Posterior cingulate gyrus (tissue), 11 donors: ENCODE measurements at regions of chr3 and their contacts with region 1.

Region 1: GRCh38 chr3:33131331-33132018 is 17.7 kb downstream of the CRTAP start:
- DNase-seq: peak in 4 of 10 donors; percentile 31 to 88 (median 48)

Region 2: GRCh38 chr3:32882603-32883025 is 248.9 kb before region 1 on chr3:
- intact Hi-C with region 1: no loop called
- DNase-seq: no peak

Region 3: GRCh38 chr3:32992322-32992692 is 139.2 kb before region 1 on chr3:
- intact Hi-C with region 1: no loop called
- DNase-seq: no peak

Region 4: GRCh38 chr3:33218446-33219174 is 87.1 kb after region 1 on chr3 and contains the start of gene SUSD5:
- intact Hi-C with region 1: loop called (anchors 10 kb)
- DNase-seq: peak in 8 of 10 donors; percentile 13 to 92 (median 44)

Region 5: GRCh38 chr3:33372218-33373081 is 241.0 kb after region 1 on chr3:
- intact Hi-C with region 1: loop called (anchors 2 kb)
- DNase-seq: peak in 4 of 10 donors; percentile 52 to 60 (median 58)